IMR-90 (cell line): ENCODE measurements at regions of chr5 and their contacts with region 1.

Region 1: DNA sequence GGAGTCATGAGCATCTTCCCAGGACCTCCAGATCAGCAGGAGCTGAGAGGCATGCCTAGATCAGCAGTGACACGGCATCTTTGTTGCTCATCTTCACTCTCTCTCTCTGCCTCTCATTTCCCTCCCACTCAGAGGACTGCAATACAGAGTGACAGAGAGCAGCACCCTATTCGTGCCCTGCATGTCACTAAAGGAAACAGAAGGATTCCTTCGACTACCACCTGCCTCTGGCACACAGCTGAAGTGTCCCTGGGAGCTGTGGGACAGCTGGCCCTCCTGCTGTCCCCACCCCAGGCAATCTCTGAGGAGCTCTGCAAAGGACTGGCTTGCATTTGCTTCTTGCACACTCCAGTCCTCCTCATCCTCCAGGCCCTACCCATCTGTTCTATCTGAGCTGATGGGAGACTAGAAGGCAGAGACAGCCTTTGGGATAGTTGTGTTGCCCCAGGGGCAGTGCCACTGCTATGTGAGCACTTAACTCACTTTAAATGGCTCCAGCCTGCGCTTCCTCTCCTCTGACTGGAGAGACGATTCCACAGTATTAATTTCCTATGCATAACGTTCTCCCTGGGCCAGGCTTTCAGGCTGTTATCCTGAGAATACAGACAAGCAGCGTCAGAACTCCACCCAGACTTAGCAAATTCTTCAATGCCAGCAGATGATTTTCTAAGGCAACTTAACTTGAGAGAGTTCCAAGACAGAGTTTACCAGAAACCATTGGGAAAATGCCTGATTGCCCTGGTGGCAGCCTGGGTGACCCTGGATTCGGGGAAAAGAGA is 167.6 kb upstream of the MAP1B start:
- DNase-seq: no peak
- ATAC-seq: no peak
- H3K4me3 ChIP-seq: no peak overlapping the region
- H3K27ac ChIP-seq: no peak overlapping the region
- H3K4me1 ChIP-seq: no peaks in the 10 kb centered on the region
- H3K27me3 ChIP-seq: peaks cover 32% of the 10 kb centered on the region
- CTCF ChIP-seq: no peak
- POLR2A ChIP-seq: no peak
- RAD21 ChIP-seq: no peak

Region 2: GRCh38 chr5:72005671-72006070 is 66.0 kb after region 1 on chr5:
- CTCF ChIA-PET with region 1: no interaction called
- POLR2A ChIA-PET with region 1: no interaction called
- dilution Hi-C with region 1: no loop called
- in situ Hi-C with region 1: no loop called
- intact Hi-C with region 1: loop called (anchors 10 kb)
- DNase-seq: no peak
- ATAC-seq: no peak
- H3K4me3 ChIP-seq: no peak overlapping the region
- H3K27ac ChIP-seq: no peak overlapping the region
- H3K4me1 ChIP-seq: no peaks in the 10 kb centered on the region
- H3K27me3 ChIP-seq: peaks cover 28% of the 10 kb centered on the region
- CTCF ChIP-seq: no peak
- POLR2A ChIP-seq: no peak
- RAD21 ChIP-seq: no peak